Activated naive CD4-positive, alpha-beta T cell treated with anti-CD3 and anti-CD28 coated beads for 36 hours (primary cell): ENCODE measurements at regions of chr11 and their contacts with region 1.

Region 1: GRCh38 chr11:12110201-12110713 is at the start of gene MICAL2:
- DNase-seq: peak; percentile 83
- H3K4me3 Mint-ChIP-seq: peak within 1 kb of the TSS; percentile 83
- H3K27ac Mint-ChIP-seq: peak within 1 kb of the TSS; percentile 91
- H3K4me1 Mint-ChIP-seq: peaks cover 25% of the 10 kb centered on the region
- H3K27me3 Mint-ChIP-seq: no peaks in the 10 kb centered on the region
- total RNA-seq, gene MICAL2: 48.7 to 54.6 TPM

Region 2: DNA sequence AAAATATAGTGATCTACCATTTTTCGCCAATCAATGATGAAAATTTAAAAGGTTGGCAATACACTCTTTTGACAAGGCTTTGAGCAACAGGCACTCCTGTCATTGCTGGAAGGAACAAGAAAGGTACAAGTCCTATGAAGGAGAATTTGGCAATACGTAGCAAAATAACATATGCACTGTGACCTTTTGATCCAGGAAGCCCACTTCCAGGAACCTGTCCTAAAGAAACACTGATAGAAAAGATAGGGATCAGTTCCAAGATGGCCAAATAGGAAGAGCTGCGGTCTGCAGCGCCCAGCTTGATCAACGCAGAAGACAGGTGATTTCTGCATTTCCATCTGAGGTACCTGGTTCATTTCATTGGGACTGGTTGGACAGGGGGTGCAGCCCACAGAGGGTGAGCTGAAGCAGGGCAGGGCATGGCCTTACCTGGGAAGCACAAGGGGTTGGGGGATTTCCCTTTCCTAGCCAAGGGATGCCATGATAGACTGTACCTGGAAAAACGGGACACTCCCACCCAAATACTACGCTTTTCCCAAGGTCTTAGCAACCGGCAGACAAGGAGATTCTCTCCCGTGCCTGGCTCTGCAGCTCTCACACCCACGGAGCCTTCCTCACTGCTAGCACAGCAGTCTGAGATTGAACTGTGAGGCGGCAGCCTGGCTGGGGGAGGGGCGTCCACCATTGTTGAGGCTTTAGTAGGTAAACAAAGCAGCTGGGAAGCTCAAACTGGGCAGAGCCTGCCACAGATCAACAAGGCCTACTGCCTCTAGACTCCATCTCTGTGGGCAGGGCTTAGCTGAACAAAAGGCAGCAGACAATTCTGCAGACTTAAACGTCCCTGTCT is 418.7 kb before region 1 on chr11:
- CTCF ChIA-PET with region 1: no interaction called
- intact Hi-C with region 1: no loop called
- DNase-seq: no peak
- H3K4me3 Mint-ChIP-seq: no peak overlapping the region
- H3K27ac Mint-ChIP-seq: no peak overlapping the region
- H3K4me1 Mint-ChIP-seq: no peaks in the 10 kb centered on the region
- H3K27me3 Mint-ChIP-seq: peaks cover 19% of the 10 kb centered on the region

Region 3: DNA sequence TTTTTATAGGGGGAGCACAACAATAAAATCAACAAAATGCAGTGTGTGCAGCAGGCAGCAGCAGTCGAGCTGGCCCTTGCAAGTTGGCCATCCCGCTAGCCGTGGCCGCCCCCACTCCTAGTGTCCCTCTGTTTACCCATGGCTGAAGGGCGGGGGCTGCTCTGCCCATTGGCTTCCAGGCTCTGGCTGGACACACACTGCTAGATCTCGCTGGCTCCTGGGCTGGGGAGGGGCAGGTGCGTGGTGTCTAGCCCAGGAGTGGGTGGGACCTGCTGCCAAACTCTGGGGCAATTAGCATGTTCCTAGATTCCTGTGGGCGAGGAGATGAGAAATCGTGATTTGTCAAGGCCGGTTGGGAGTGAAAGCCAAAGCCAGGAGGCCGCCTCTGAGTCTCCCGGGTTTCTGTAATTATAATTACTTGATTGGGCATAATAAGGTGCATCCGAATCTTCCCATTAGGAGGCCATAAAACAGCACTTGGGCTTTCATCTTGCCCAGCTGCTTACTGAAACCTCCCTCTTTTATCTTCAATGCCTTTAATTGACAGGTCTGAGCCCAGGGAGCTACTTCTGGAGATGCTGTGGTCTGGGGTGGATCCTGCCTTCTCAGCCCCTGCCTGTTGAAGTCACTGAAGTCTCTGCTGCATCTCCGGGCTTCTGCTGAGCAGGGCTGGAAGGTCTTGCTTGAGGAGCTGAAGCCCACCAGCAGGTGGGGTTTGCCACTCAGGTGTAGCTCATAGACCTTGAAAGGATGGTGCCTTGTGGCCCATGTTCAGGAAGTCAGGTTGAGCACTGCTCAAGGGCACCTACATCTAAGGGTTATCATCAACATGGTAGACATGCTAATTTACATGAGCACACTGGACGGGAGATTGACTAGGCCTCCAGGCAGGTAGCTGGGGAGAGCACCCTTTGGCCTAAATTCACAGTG is 57.3 kb before region 1 on chr11:
- CTCF ChIA-PET with region 1: interaction called, 5 read pairs
- intact Hi-C with region 1: loop called (anchors 5 kb)
- DNase-seq: peak; percentile 52
- H3K4me3 Mint-ChIP-seq: no peak overlapping the region
- H3K27ac Mint-ChIP-seq: no peak overlapping the region
- H3K4me1 Mint-ChIP-seq: no peaks in the 10 kb centered on the region
- H3K27me3 Mint-ChIP-seq: no peaks in the 10 kb centered on the region

Region 4: DNA sequence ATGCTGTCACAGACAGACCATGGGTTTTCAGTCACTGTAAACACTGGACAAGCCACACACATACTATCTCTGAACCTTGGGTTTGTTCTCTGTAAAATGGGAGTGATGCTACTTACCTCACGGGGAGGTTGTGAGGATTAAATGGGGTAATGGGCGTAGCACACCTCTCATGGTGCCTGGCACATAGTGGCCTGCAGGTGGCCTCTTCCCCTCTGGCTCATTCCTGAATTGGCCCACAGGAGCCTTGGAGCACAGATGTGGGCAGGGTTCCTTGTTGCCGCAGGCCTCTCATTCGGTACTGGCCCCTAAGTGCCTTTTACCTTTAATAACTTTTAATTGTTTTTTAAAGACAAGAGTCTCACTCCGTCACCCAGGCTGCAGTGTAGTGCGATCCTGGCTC is 11.8 kb after region 1 on chr11:
- CTCF ChIA-PET with region 1: interaction called, 3 read pairs
- intact Hi-C with region 1: loop called (anchors 1 kb)
- DNase-seq: no peak
- H3K4me3 Mint-ChIP-seq: no peak overlapping the region
- H3K27ac Mint-ChIP-seq: no peak overlapping the region
- H3K4me1 Mint-ChIP-seq: peaks cover 45% of the 10 kb centered on the region
- H3K27me3 Mint-ChIP-seq: no peaks in the 10 kb centered on the region

Region 5: DNA sequence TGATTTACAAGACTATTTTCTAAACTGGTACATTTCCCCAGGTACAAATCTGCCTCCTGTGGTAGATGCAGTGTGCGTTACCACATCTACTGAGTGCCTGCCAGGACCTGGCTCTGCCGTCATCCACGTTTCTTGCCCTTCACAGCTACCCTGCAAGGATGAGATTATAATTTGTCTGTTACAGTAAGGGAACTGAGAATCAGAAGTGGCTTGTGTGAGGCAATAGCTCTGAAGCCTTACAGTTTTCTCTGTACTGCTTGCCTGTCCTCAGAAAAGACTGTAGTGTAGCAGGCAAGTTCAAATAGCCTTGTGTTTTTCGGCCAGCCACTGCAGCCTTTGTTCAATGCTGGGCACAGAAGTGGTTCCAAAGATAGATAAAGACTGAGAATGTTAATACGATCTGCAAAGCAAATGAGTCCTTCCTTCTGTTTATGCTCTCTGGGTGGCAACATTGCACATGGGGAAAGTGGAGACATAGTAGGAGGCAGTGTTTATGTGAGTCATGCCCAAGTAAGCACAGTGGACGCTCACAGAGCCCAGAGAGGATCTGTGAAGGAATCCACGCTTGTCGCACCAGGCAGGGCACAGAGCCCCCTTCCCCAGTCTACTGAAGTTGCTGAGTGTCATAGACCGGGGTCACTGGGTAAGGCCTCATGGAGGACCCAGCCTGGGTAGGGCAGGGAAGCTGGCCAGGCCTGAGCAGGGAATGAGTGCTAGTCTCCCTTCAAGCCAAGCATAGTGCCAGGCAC is 49.3 kb after region 1 on chr11:
- CTCF ChIA-PET with region 1: interaction called, 6 read pairs
- intact Hi-C with region 1: loop called (anchors 1 kb)
- DNase-seq: no peak
- H3K4me3 Mint-ChIP-seq: no peak overlapping the region
- H3K27ac Mint-ChIP-seq: no peak overlapping the region
- H3K4me1 Mint-ChIP-seq: peaks cover 42% of the 10 kb centered on the region
- H3K27me3 Mint-ChIP-seq: no peaks in the 10 kb centered on the region

Region 6: GRCh38 chr11:12281571-12282478 is 171.6 kb after region 1 on chr11:
- CTCF ChIA-PET with region 1: interaction called, 15 read pairs
- intact Hi-C with region 1: no loop called
- DNase-seq: peak; percentile 87
- H3K4me3 Mint-ChIP-seq: no peak overlapping the region
- H3K27ac Mint-ChIP-seq: no peak overlapping the region
- H3K4me1 Mint-ChIP-seq: peaks cover 2% of the 10 kb centered on the region
- H3K27me3 Mint-ChIP-seq: no peaks in the 10 kb centered on the region

Region 7: GRCh38 chr11:12430955-12431354 is 320.7 kb after region 1 on chr11:
- CTCF ChIA-PET with region 1: no interaction called
- intact Hi-C with region 1: no loop called
- DNase-seq: no peak
- H3K4me3 Mint-ChIP-seq: no peak overlapping the region
- H3K27ac Mint-ChIP-seq: no peak overlapping the region
- H3K4me1 Mint-ChIP-seq: no peaks in the 10 kb centered on the region
- H3K27me3 Mint-ChIP-seq: no peaks in the 10 kb centered on the region